Caco-2 (cell line): ENCODE measurements at regions of chr21 and their contacts with region 1.

Region 1: DNA sequence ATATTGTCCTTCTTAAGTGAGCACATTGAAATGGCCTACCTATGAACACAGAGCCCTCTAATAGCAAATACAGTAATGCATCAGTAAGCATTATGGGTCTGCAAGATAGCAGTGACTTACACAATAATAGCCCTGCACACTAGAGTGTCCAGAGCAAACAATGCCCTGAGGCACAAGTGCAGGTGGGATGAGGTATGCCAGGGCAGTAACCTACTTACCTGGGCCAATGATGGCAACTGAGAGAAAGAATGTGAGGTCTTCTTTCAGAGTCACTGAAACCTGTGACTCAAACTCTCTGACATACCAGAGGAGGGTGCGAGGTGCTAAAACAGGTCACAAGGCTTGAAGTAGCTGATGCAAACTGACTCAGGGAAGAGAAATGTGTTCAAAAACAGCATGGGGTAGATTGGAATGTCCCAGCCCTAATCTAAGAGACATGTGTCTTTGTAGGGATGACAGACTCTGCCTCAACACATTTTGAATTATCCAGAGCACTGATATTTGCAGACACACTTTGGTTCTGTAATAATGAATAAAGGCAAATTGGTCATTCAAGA is 168.5 kb upstream of the RUNX1 start:
- DNase-seq: peak; percentile 85 to 90
- H3K4me3 ChIP-seq: no peak overlapping the region
- H3K4me3 Mint-ChIP-seq: no peak overlapping the region
- H3K27ac Mint-ChIP-seq: peak overlapping the region; percentile 92
- H3K4me1 ChIP-seq: peaks cover 21% of the 10 kb centered on the region
- H3K4me1 Mint-ChIP-seq: peaks cover 10% of the 10 kb centered on the region
- H3K27me3 ChIP-seq: no peaks in the 10 kb centered on the region
- H3K27me3 Mint-ChIP-seq: no peaks in the 10 kb centered on the region
- CTCF ChIP-seq: no peak

Region 2: DNA sequence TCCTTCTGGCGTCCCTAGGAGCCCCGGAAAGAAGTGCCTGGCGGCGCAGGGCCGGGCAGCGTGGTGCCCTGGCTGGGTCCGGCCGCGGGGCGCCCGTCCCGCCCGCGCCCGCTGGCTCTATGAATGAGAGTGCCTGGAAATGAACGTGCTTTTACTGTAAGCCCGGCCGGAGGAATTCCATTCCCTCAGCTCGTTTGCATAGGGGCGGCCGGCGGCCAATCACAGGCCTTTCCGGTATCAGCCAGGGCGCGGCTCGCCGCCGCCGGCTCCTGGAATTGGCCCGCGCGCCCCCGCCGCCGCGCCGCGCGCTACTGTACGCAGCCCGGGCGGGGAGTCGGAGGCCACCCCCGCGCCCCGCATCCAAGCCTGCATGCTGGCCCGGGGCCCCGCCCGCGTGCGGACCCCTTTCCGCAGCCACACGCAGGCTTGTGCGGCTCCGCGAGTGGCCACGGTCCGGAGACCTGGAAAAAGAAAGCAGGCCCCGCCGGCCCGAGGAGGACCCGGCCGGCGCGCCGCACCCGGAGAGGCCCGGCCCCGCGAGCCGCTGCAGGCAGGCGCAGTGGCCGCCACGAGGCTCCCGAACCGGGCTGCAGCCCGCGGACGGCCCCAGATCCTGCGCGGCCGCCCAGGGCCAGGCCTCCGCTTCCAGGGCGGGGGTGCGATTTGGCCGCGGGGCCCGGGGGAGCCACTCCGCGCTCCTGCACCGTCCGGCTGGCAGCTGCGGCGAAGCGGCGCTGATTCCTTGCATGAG is 328.8 kb before region 1 on chr21:
- CTCF ChIA-PET with region 1: no interaction called
- POLR2A ChIA-PET with region 1: no interaction called
- intact Hi-C with region 1: loop called (anchors 10 kb)
- DNase-seq: peak; percentile 93 to 94
- H3K4me3 ChIP-seq: peak overlapping the region; percentile 78
- H3K4me3 Mint-ChIP-seq: peak overlapping the region; percentile 93
- H3K27ac Mint-ChIP-seq: peak overlapping the region; percentile 83
- H3K4me1 ChIP-seq: no peaks in the 10 kb centered on the region
- H3K4me1 Mint-ChIP-seq: no peaks in the 10 kb centered on the region
- H3K27me3 ChIP-seq: peaks cover 2% of the 10 kb centered on the region; the same call in 1 of the 2 replicates
- H3K27me3 Mint-ChIP-seq: no peaks in the 10 kb centered on the region
- CTCF ChIP-seq: no peak

Region 3: GRCh38 chr21:34908419-34909055 is 309.0 kb before region 1 on chr21:
- CTCF ChIA-PET with region 1: no interaction called
- POLR2A ChIA-PET with region 1: no interaction called
- intact Hi-C with region 1: loop called (anchors 1 kb)
- DNase-seq: peak; percentile 92 to 94
- H3K4me3 ChIP-seq: no peak overlapping the region
- H3K4me3 Mint-ChIP-seq: peak overlapping the region; percentile 65
- H3K27ac Mint-ChIP-seq: peak overlapping the region; percentile 83
- H3K4me1 ChIP-seq: peaks cover 19% of the 10 kb centered on the region
- H3K4me1 Mint-ChIP-seq: peaks cover 32% of the 10 kb centered on the region
- H3K27me3 ChIP-seq: no peaks in the 10 kb centered on the region; the same call in 1 of the 2 replicates
- H3K27me3 Mint-ChIP-seq: no peaks in the 10 kb centered on the region
- CTCF ChIP-seq: no peak

Region 4: DNA sequence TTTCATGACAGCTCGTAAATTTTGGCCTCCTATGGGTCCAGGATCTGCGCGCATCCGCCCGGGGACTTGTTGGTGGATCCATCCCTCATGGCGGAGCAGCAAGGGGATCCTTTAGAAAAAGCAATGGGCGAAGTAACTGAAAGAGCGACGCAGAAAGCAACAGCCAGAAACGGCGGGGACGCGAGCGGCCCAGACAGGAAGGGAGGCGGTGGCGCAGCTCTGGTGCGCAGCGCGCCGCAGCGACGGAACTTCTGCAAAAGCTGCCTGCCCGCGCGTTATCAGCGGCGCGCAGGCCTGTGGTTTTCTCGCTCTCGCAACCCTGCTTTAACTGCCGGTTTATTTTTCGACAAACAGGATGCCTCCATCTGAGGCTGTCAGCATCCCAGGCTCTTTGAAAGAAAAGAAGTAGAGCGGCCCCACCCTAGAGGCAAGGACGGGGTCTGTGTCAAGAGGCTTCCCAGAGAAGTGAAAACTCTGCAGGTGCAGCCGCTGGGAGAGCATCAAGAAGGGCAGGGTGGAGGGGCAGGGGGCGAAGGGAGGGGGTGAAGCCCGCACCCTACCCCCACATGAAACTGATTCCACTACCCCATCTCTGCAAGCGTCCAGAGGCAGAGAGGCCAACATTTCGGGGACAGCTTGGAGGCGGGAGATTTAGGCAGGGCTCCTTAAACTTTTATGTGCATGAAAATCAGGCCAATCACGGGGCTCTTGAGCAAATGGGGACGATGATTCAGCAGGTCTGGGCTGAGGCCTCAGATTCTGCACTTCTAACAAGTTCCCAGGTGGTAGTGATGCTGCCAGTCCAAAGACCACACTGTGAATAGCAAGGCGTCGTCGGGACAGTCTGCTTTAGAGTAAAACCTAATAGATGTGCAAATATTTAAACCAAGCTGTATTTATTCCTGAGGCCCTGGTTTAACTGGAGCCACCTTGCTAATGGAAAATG is 190.7 kb before region 1 on chr21:
- CTCF ChIA-PET with region 1: no interaction called
- POLR2A ChIA-PET with region 1: no interaction called
- intact Hi-C with region 1: loop called (anchors 1 kb)
- DNase-seq: peak; percentile 72 to 83
- H3K4me3 ChIP-seq: no peak overlapping the region
- H3K4me3 Mint-ChIP-seq: peak overlapping the region; percentile 65
- H3K27ac Mint-ChIP-seq: peak overlapping the region; percentile 87
- H3K4me1 ChIP-seq: peaks cover 44% of the 10 kb centered on the region
- H3K4me1 Mint-ChIP-seq: peaks cover 11% of the 10 kb centered on the region
- H3K27me3 ChIP-seq: no peaks in the 10 kb centered on the region
- H3K27me3 Mint-ChIP-seq: no peaks in the 10 kb centered on the region
- CTCF ChIP-seq: no peak

Region 5: DNA sequence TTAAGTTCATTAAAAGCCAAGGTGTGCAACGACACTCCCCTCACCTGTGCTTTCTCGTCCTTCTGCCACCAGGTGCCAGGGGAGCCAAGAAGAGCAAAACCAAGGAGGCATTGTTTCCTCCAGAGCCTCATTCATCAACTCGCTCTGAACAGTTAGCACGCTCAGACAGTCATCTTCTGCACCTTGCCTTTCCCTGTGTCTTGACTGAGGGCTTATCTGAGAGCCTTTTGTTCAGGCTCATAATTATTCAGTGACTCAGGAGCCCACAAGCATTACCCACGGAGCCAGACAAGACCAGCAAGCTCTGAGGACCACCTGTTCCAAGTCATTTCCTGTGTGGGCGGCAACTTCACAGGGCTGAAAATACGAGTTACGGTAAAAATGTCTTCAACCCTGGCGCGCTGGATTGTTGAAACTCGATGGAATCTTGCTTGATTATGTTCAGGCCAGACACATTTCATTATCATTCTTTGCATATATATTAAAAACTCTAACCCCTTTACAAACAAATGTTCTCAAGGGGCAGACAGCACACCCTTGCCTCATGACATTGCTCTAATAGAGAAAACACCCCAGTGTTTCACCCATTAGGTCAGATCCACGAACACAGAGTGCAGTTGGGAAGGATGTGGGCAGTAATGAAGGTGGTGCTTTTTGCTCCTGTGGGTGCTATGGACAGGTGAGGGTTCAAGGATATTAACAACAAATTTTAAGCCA is 78.8 kb before region 1 on chr21:
- CTCF ChIA-PET with region 1: no interaction called
- POLR2A ChIA-PET with region 1: no interaction called
- intact Hi-C with region 1: no loop called
- DNase-seq: peak; percentile 12 to 59
- H3K4me3 ChIP-seq: no peak overlapping the region
- H3K4me3 Mint-ChIP-seq: no peak overlapping the region
- H3K27ac Mint-ChIP-seq: peak overlapping the region; percentile 57
- H3K4me1 ChIP-seq: peaks cover 36% of the 10 kb centered on the region
- H3K4me1 Mint-ChIP-seq: peaks cover 29% of the 10 kb centered on the region
- H3K27me3 ChIP-seq: no peaks in the 10 kb centered on the region
- H3K27me3 Mint-ChIP-seq: no peaks in the 10 kb centered on the region
- CTCF ChIP-seq: no peak

Region 6: DNA sequence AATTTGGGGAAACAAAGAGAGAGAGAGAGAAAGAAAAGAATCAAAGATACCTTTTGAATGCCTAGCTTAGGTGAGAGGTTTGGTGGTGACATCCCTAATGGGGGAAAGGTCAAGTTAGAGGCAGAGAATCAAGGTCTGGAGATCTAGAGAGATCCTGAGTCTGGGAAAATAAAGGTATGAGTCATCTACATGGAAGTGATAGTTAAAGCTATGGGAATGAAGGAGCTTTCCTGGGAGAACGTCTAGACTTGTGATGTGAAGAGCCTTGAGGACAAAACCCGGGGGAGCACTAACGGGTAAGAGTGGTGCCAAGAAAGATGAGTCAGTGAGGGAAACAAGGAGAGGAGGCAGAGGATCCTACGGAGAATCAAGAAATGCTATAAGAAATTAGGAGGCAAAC is 57.7 kb before region 1 on chr21:
- CTCF ChIA-PET with region 1: no interaction called
- POLR2A ChIA-PET with region 1: no interaction called
- intact Hi-C with region 1: loop called (anchors 5 kb)
- DNase-seq: no peak
- H3K4me3 ChIP-seq: no peak overlapping the region
- H3K4me3 Mint-ChIP-seq: no peak overlapping the region
- H3K27ac Mint-ChIP-seq: no peak overlapping the region
- H3K4me1 ChIP-seq: peaks cover 12% of the 10 kb centered on the region; the same call in 1 of the 2 replicates
- H3K4me1 Mint-ChIP-seq: peaks cover 24% of the 10 kb centered on the region
- H3K27me3 ChIP-seq: no peaks in the 10 kb centered on the region
- H3K27me3 Mint-ChIP-seq: no peaks in the 10 kb centered on the region
- CTCF ChIP-seq: no peak